ENCODE measurements at regions of chr22 and their contacts with region 1.

Region 1: GRCh38 chr22:17501679-17502285 is 61.5 kb upstream of the SLC25A18 start:
- DNase-seq: peak; percentile 47 to 72 (median 63)
- H3K4me3 ChIP-seq: no peak overlapping the region
- H3K4me3 Mint-ChIP-seq: no peak overlapping the region
- H3K27ac ChIP-seq: no peak overlapping the region
- H3K27ac Mint-ChIP-seq: no peak overlapping the region
- H3K4me1 ChIP-seq: peaks cover 19% of the 10 kb centered on the region in 2 donors
- H3K4me1 Mint-ChIP-seq: peaks cover 20% of the 10 kb centered on the region
- H3K27me3 ChIP-seq: no peaks in the 10 kb centered on the region
- H3K27me3 Mint-ChIP-seq: peaks cover 0 to 5% (median 2%) of the 10 kb centered on the region in 3 donors
- CTCF ChIP-seq: peak; percentile 79

Region 2: DNA sequence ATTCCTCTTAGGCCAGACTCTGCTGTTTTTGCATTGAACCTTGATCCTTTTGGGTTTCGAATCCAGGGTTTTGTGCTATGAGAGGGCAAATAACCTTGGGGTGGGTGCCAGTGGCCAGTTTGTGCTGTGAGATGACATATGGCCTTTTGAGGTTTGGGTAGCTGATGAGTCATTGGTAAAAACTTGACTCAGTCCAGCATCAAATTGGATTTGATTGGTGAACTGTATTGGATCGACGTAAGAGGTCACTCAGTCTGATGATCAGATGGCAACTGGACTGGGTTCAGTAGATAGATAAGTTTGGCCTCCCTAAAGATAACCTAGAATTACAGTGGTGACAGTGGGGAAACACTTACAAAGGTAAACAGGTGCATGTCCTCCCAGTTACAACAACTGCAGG is 635.6 kb before region 1 on chr22:
- intact Hi-C with region 1: no loop called
- DNase-seq: no peak
- H3K4me3 ChIP-seq: no peak overlapping the region
- H3K4me3 Mint-ChIP-seq: no peak overlapping the region
- H3K27ac ChIP-seq: no peak overlapping the region
- H3K27ac Mint-ChIP-seq: no peak overlapping the region
- H3K4me1 ChIP-seq: peaks cover 0 to 6% of the 10 kb centered on the region in 2 donors
- H3K4me1 Mint-ChIP-seq: peaks cover 10% of the 10 kb centered on the region
- H3K27me3 ChIP-seq: no peaks in the 10 kb centered on the region
- H3K27me3 Mint-ChIP-seq: peaks cover 2 to 7% (median 3%) of the 10 kb centered on the region in 3 donors
- CTCF ChIP-seq: no peak

Region 3: DNA sequence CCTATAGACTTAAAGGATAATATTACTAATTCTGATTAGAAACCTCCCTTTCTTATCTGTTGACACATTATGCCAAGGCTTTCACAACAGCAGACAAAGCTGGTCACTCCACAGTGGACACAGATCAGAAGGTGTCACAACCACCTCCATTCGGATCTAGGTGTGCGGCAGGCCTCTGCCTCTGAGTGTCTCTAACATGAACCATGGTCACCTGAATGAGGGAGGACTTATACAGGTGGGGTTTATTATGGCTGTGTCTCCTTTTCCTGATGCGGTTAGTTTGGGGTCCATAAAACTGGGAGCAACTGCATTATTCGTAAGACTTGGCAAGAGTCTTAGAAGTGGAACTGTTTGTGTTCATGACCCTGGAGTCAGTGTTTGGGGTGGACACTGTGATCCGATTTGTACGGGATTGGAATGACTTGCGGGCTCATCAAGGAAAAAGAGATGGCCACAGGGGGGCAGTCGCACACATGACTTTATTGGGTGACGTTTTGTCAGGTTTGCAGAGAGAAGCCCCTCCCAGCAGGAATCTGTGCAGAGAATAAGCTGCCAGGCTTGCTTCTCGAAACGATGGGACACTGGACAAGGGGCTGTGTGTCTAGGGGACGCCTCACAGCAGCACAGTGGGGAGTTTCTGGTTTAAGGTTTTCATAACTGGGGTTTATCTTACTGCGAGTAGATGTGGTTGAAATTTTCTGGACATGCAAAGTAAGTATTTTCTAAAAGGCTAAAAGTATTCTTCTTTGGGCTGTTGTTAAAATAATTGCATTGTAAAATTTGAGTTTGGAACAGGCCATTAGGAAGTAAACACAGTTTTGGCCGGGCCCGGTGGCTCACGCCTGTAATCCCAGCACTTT is 584.4 kb before region 1 on chr22:
- intact Hi-C with region 1: loop called in 1 of 2 experiments (anchors 10 kb)
- DNase-seq: peak; percentile 35 to 51 (median 40)
- H3K4me3 ChIP-seq: no peak overlapping the region
- H3K4me3 Mint-ChIP-seq: no peak overlapping the region
- H3K27ac ChIP-seq: no peak overlapping the region
- H3K27ac Mint-ChIP-seq: no peak overlapping the region
- H3K4me1 ChIP-seq: no peaks in the 10 kb centered on the region
- H3K4me1 Mint-ChIP-seq: peaks cover 5% of the 10 kb centered on the region
- H3K27me3 ChIP-seq: no peaks in the 10 kb centered on the region
- H3K27me3 Mint-ChIP-seq: peaks cover 2 to 4% (median 3%) of the 10 kb centered on the region in 3 donors
- CTCF ChIP-seq: peak; percentile 72

Region 4: DNA sequence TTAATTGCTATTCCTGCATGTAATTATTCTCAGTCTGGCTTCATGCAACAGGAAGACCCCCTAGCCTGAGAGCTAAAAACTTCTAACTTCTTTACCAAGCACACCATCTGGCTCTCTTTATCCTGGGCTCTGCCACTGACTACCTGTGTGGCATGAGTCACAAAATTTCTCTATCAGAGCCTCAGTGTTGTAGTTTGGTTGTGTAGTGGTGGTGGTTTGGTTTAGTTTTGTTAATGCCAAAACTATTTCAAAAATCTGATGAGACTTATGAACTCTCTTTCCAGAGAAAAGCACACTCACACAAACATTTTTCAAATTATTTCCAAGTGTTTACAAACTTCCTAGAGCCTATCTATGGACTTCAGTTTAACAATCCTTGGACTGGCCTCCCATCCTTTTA is 424.5 kb before region 1 on chr22:
- intact Hi-C with region 1: loop called (anchors 2 to 5 kb)
- DNase-seq: no peak
- H3K4me3 ChIP-seq: no peak overlapping the region
- H3K4me3 Mint-ChIP-seq: no peak overlapping the region
- H3K27ac ChIP-seq: no peak overlapping the region
- H3K27ac Mint-ChIP-seq: peak overlapping the region in 4 of 7 donors; percentile 35 to 88 (median 68)
- H3K4me1 ChIP-seq: peaks cover 33 to 42% of the 10 kb centered on the region in 2 donors
- H3K4me1 Mint-ChIP-seq: peaks cover 40% of the 10 kb centered on the region
- H3K27me3 ChIP-seq: no peaks in the 10 kb centered on the region
- H3K27me3 Mint-ChIP-seq: peaks cover 2 to 5% (median 4%) of the 10 kb centered on the region in 3 donors
- CTCF ChIP-seq: no peak

Region 5: GRCh38 chr22:17171313-17172171 is 330.2 kb before region 1 on chr22:
- intact Hi-C with region 1: loop called (anchors 2 to 5 kb)
- DNase-seq: peak; percentile 82 to 86 (median 82)
- H3K4me3 ChIP-seq: peak overlapping the region; percentile 39 to 82 (median 70)
- H3K4me3 Mint-ChIP-seq: peak overlapping the region; percentile 83 to 87
- H3K27ac ChIP-seq: peak overlapping the region; percentile 91 to 92
- H3K27ac Mint-ChIP-seq: peak overlapping the region; percentile 87 to 96 (median 94)
- H3K4me1 ChIP-seq: peaks cover 11 to 12% of the 10 kb centered on the region in 2 donors
- H3K4me1 Mint-ChIP-seq: peaks cover 9% of the 10 kb centered on the region
- H3K27me3 ChIP-seq: no peaks in the 10 kb centered on the region
- H3K27me3 Mint-ChIP-seq: peaks cover 2 to 7% (median 2%) of the 10 kb centered on the region in 3 donors
- CTCF ChIP-seq: peak; percentile 96

Region 6: GRCh38 chr22:17213976-17214375 is 287.8 kb before region 1 on chr22:
- intact Hi-C with region 1: loop called in 1 of 2 experiments (anchors 5 kb)
- DNase-seq: peak; percentile 51 to 63 (median 52)
- H3K4me3 ChIP-seq: no peak overlapping the region
- H3K4me3 Mint-ChIP-seq: no peak overlapping the region
- H3K27ac ChIP-seq: peak overlapping the region in 1 of 2 donors; percentile 83
- H3K27ac Mint-ChIP-seq: peak overlapping the region; percentile 43 to 89 (median 85)
- H3K4me1 ChIP-seq: peaks cover 32 to 46% of the 10 kb centered on the region in 2 donors
- H3K4me1 Mint-ChIP-seq: peaks cover 41% of the 10 kb centered on the region
- H3K27me3 ChIP-seq: no peaks in the 10 kb centered on the region
- H3K27me3 Mint-ChIP-seq: peaks cover 0 to 1% (median 0%) of the 10 kb centered on the region in 3 donors
- CTCF ChIP-seq: peak; percentile 64

Region 7: GRCh38 chr22:17266251-17266971 is 235.4 kb before region 1 on chr22:
- intact Hi-C with region 1: loop called in 1 of 2 experiments (anchors 10 kb)
- DNase-seq: no peak
- H3K4me3 ChIP-seq: no peak overlapping the region
- H3K4me3 Mint-ChIP-seq: no peak overlapping the region
- H3K27ac ChIP-seq: no peak overlapping the region
- H3K27ac Mint-ChIP-seq: peak overlapping the region in 2 of 7 donors; percentile 1 to 20
- H3K4me1 ChIP-seq: no peaks in the 10 kb centered on the region
- H3K4me1 Mint-ChIP-seq: peaks cover 2% of the 10 kb centered on the region
- H3K27me3 ChIP-seq: no peaks in the 10 kb centered on the region
- H3K27me3 Mint-ChIP-seq: peaks cover 0 to 8% (median 2%) of the 10 kb centered on the region in 3 donors
- CTCF ChIP-seq: no peak

Measured in CD14-positive monocyte (primary cell).